IMR-90 (cell line): ENCODE measurements at regions of chr11 and their contacts with region 1.

Region 1: DNA sequence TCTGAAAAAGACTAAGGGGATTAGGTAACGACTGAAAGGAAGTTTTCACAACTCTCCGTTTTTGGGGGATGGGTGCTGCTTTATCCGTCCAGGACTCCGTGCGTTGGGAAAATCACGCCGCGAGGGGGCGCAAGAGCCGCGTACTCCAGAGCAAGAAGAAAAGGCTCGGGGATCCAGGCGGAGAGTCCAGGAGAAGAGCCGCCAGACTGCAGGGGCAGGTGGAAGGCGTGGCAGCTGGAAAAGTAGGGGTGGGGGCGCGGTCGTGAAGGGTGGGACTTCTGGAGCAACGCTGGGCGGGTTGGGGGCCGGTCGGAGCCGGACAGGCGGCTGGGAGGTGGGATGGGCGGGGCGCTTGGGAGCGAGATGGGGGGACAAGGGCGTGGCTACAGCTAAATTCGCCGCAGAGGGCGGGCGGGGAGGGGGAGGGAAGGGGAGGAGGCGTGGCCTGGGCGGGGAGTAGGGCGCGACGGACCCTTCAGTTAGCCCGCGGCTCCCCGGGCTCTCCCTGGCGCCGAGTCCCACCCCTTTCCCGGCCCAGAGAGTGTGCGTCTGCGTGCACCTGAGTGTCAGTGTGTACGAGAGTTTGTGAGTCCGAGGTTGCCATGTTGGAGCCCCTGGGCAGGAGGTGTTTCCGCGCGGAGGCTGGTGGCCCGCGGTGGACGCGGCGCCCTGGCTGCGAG is 613 bp upstream of the ARHGEF17 start:
- DNase-seq: peak; percentile 98
- ATAC-seq: peak; percentile 60
- H3K4me3 ChIP-seq: peak overlapping the region; percentile 63
- H3K27ac ChIP-seq: peak overlapping the region; percentile 93
- H3K4me1 ChIP-seq: peaks cover 23% of the 10 kb centered on the region
- H3K27me3 ChIP-seq: no peaks in the 10 kb centered on the region
- CTCF ChIP-seq: peak; percentile 98
- POLR2A ChIP-seq: 0 out of 2 replicates have a peak, but pooled peaks have one; percentile 32
- RAD21 ChIP-seq: peak; percentile 97

Region 2: GRCh38 chr11:73323464-73323863 is 16.0 kb after region 1 on chr11:
- CTCF ChIA-PET with region 1: interaction called, 3 read pairs
- POLR2A ChIA-PET with region 1: interaction called, 4 read pairs
- dilution Hi-C with region 1: no loop called
- in situ Hi-C with region 1: no loop called
- intact Hi-C with region 1: loop called (anchors 1 kb)
- DNase-seq: peak; percentile 77
- ATAC-seq: peak; percentile 66
- H3K4me3 ChIP-seq: no peak overlapping the region
- H3K27ac ChIP-seq: peak overlapping the region; percentile 98
- H3K4me1 ChIP-seq: peaks cover 74% of the 10 kb centered on the region
- H3K27me3 ChIP-seq: no peaks in the 10 kb centered on the region
- CTCF ChIP-seq: no peak
- POLR2A ChIP-seq: no peak
- RAD21 ChIP-seq: no peak

Region 3: DNA sequence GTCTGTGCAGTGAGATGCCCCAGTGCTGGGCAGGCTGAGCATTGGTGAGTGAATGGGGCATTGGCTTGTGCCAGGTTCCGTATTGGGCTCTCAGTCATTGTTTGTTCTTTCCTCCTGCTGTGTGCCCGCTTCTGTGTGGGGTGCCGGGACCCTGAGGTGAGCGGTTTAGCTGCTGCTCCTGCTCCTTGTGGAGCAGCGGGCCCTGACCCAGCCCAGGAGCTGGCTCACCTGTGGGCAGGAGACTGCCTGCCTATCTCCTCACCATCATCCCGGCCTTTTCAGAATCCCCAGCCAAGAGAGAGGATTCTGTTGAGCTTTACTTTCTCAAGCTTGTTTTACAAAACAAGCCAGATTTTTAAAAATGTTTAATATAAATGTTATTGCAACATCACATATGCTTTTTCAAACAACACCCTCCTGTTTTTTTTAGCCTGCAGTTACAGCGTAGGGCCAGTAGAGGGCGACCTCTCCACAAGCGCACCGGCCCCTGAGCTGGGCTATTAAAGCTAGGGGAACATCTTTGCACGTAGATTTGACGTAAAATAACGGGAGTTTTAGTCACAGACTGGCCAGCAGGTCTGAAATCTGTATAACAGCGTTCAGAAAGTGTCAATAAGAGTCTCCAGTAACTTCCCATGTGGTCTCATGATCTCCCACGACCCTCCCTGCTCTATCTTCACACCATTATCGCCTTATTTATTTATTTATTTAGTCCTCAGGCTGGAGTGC is 43.6 kb after region 1 on chr11:
- CTCF ChIA-PET with region 1: interaction called, 25 read pairs
- POLR2A ChIA-PET with region 1: interaction called, 4 read pairs
- dilution Hi-C with region 1: no loop called
- in situ Hi-C with region 1: no loop called
- intact Hi-C with region 1: no loop called
- DNase-seq: peak; percentile 84
- ATAC-seq: peak; percentile 94
- H3K4me3 ChIP-seq: no peak overlapping the region
- H3K27ac ChIP-seq: peak overlapping the region; percentile 63; the same call in 1 of the 2 replicates
- H3K4me1 ChIP-seq: peaks cover 8% of the 10 kb centered on the region; the same call in 1 of the 2 replicates
- H3K27me3 ChIP-seq: no peaks in the 10 kb centered on the region
- CTCF ChIP-seq: peak; percentile 94
- POLR2A ChIP-seq: no peak
- RAD21 ChIP-seq: peak; percentile 74

Region 4: GRCh38 chr11:73376160-73376802 is 68.8 kb after region 1 on chr11 and contains the start of gene RELT:
- CTCF ChIA-PET with region 1: interaction called, 3 read pairs
- POLR2A ChIA-PET with region 1: no interaction called
- dilution Hi-C with region 1: no loop called
- in situ Hi-C with region 1: no loop called
- intact Hi-C with region 1: loop called (anchors 5 kb)
- DNase-seq: peak; percentile 89
- ATAC-seq: peak; percentile 95
- H3K4me3 ChIP-seq: peak within 1 kb of the TSS; percentile 66
- H3K27ac ChIP-seq: peak within 1 kb of the TSS; percentile 51
- H3K4me1 ChIP-seq: peaks cover 6% of the 10 kb centered on the region; the same call in 1 of the 2 replicates
- H3K27me3 ChIP-seq: no peaks in the 10 kb centered on the region
- CTCF ChIP-seq: peak; percentile 91
- POLR2A ChIP-seq: peak; percentile 99
- RAD21 ChIP-seq: peak; percentile 47
- total RNA-seq, gene RELT: 2.3 and 3.1 TPM in 2 replicates

Region 5: DNA sequence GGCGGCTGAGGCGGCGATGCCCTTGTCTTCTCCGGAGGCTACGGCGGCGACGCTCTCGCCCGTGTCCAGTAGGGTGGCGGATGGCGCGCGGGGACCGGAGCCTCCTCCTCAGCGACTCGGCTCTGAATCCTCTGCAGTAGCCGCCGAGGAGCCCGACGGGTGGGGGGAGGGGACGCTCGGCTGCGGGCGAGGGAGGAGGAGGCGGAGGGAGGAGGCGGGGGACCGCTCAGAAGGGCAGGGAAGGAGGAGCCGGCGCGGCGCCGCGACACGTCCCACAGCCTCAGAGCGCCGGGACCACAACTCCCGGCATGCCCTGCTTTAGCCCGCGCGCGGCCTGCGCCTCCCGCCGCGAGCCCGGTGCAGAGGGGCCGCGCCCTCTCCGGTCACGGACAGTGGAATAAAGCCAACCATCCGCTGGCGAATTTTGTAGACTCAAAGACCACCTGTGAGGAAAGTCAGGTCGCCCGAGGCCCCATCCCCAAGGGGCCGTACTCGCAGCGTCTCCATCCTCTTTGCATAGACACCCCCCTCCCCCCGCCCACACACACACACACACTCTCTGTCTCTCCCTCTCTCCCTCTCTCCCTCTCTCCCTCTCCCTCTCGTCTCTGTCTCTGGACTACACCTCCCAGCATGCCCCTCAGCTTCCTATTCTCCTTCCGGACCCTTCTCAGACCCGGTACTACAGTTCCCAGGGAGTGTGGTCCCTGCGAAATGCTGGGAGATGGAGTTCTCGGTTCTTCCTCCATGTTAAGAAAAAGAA is 290.7 kb after region 1 on chr11 and contains the start of gene FAM168A:
- CTCF ChIA-PET with region 1: no interaction called
- POLR2A ChIA-PET with region 1: no interaction called
- dilution Hi-C with region 1: no loop called
- in situ Hi-C with region 1: no loop called
- intact Hi-C with region 1: loop called (anchors 10 kb)
- DNase-seq: peak; percentile 97
- ATAC-seq: peak; percentile 98
- H3K4me3 ChIP-seq: peak within 1 kb of the TSS; percentile 88
- H3K27ac ChIP-seq: peak within 1 kb of the TSS; percentile 96
- H3K4me1 ChIP-seq: peaks cover 6% of the 10 kb centered on the region; the same call in 1 of the 2 replicates
- H3K27me3 ChIP-seq: no peaks in the 10 kb centered on the region
- CTCF ChIP-seq: peak; percentile 16; the same call in 1 of the 2 replicates
- POLR2A ChIP-seq: no peak
- RAD21 ChIP-seq: peak; percentile 25; the same call in 1 of the 2 replicates
- total RNA-seq, gene FAM168A: 13.1 and 13.6 TPM in 2 replicates